Ascending aorta (tissue), 2 donors: ENCODE measurements at regions of chr1 and their contacts with region 1.

Region 1: DNA sequence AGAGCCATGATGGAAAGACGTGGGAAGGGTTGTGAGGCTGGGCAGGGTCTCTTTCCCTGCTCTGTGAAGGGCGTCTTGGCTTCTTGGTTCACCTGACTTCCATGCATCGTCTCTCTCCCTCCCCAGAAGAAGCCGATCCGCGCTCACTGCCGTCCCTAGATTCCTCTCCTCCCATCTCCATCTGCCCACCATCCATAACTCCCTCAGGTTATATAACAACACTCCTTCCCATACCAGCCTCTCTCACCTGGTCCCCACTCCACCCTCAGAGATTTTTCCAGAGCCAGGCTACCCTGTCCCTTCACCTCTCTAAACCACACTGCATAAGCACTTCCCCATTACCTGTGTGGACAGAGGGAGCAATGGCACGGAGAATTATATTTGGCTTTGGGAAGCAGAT is 6.0 kb downstream of the KCND3 start:
- DNase-seq: no peak
- H3K4me3 ChIP-seq: no peak overlapping the region
- H3K27ac ChIP-seq: no peak overlapping the region
- H3K4me1 ChIP-seq: peaks cover 3 to 12% of the 10 kb centered on the region in 2 donors
- H3K27me3 ChIP-seq: no peaks in the 10 kb centered on the region
- CTCF ChIP-seq: no peak

Region 2: GRCh38 chr1:111914426-111914825 is 69.1 kb before region 1 on chr1:
- intact Hi-C with region 1: loop called (anchors 2 kb)
- DNase-seq: no peak
- H3K4me3 ChIP-seq: no peak overlapping the region
- H3K27ac ChIP-seq: no peak overlapping the region
- H3K4me1 ChIP-seq: no peaks in the 10 kb centered on the region
- H3K27me3 ChIP-seq: no peaks in the 10 kb centered on the region
- CTCF ChIP-seq: no peak